Activated naive CD4-positive, alpha-beta T cell treated with anti-CD3 and anti-CD28 coated beads for 36 hours (primary cell): ENCODE measurements at regions of chr18 and their contacts with region 1.

Region 1: DNA sequence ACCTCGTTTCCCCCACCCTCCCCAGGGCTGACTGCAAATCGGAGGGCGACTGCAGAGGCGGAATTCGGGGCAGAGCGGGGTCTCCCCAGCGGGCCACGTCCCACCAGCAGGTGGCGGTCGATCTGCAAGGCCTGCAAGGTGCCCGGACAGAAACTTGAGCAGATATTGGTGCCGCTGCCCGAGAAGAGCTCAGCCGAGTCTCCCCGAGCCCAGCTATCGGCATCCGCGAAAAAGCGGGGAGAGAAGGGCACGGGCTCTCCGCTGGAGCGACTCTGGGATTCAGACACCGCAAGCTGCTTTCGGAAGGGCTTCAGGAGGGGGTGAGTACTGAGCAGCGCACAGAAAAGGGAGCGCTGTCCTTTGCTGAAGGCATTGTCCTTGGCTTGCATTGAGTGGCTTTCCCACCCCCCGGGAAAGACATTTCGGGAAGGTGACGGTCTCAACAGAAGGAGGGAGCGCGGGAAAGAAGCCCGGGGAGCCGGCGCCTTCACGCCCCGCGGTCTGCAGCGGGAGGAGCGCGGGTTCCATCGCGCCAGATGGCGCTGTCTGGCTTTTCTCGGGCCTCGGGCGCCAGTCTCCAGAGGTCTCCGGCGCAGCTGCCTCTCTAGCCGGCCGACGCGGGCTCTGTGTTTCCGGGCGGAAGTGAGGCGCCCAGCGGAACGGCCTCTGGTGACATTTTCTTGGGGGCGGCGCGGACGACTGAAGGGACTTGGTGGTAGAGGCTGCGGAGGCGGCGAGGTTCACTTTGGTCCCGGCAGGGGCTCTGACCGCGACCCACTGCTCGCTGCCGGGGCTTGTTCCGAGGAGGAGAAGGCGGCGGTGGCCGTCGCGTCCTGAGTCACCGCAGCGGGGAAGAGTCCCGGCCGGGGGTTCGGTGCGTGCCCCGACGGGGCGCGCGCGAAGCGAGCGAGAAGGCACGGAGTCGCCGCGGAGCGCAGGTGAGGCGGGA is 69.5 kb downstream of the HAUS1 start:
- DNase-seq: peak; percentile 95
- H3K4me3 Mint-ChIP-seq: peak overlapping the region; percentile 99
- H3K27ac Mint-ChIP-seq: peak overlapping the region; percentile 97
- H3K4me1 Mint-ChIP-seq: peaks cover 44% of the 10 kb centered on the region
- H3K27me3 Mint-ChIP-seq: no peaks in the 10 kb centered on the region

Region 2: DNA sequence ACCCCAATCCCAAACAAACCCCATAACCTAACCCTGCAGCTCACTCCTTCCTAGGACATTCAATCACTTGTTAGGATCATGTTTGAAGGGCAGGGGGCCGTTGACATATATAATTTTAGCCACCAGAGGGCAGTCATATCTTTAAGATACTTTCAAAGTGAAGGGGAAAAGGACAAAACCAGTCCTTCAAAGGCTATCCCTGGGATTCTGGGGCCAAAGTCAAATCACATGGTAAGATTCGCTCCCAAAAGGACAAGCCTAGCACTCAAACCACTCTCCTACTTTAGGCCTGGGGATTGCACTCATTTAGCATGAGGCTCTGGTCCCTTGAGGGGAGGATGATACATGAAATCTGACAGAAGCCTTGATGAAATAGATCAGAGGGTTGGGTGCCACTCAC is 24.9 kb before region 1 on chr18:
- CTCF ChIA-PET with region 1: interaction called, 29 read pairs
- intact Hi-C with region 1: loop called (anchors 1 kb)
- DNase-seq: peak; percentile 70
- H3K4me3 Mint-ChIP-seq: no peak overlapping the region
- H3K27ac Mint-ChIP-seq: peak overlapping the region; percentile 39
- H3K4me1 Mint-ChIP-seq: peaks cover 31% of the 10 kb centered on the region
- H3K27me3 Mint-ChIP-seq: no peaks in the 10 kb centered on the region

Region 3: GRCh38 chr18:46213295-46213694 is 39.6 kb after region 1 on chr18:
- CTCF ChIA-PET with region 1: interaction called, 97 read pairs
- intact Hi-C with region 1: loop called (anchors 1 kb)
- DNase-seq: no peak
- H3K4me3 Mint-ChIP-seq: no peak overlapping the region
- H3K27ac Mint-ChIP-seq: no peak overlapping the region
- H3K4me1 Mint-ChIP-seq: peaks cover 76% of the 10 kb centered on the region
- H3K27me3 Mint-ChIP-seq: no peaks in the 10 kb centered on the region

Region 4: GRCh38 chr18:46264235-46264893 is 90.7 kb after region 1 on chr18:
- CTCF ChIA-PET with region 1: interaction called, 15 read pairs
- intact Hi-C with region 1: no loop called
- DNase-seq: no peak
- H3K4me3 Mint-ChIP-seq: no peak overlapping the region
- H3K27ac Mint-ChIP-seq: no peak overlapping the region
- H3K4me1 Mint-ChIP-seq: peaks cover 51% of the 10 kb centered on the region
- H3K27me3 Mint-ChIP-seq: no peaks in the 10 kb centered on the region

Region 5: GRCh38 chr18:46343931-46344372 is 170.3 kb after region 1 on chr18:
- CTCF ChIA-PET with region 1: interaction called, 5 read pairs
- intact Hi-C with region 1: loop called (anchors 5 kb)
- DNase-seq: peak; percentile 85
- H3K4me3 Mint-ChIP-seq: no peak overlapping the region
- H3K27ac Mint-ChIP-seq: peak overlapping the region; percentile 57
- H3K4me1 Mint-ChIP-seq: peaks cover 23% of the 10 kb centered on the region
- H3K27me3 Mint-ChIP-seq: peaks cover 3% of the 10 kb centered on the region

Region 6: DNA sequence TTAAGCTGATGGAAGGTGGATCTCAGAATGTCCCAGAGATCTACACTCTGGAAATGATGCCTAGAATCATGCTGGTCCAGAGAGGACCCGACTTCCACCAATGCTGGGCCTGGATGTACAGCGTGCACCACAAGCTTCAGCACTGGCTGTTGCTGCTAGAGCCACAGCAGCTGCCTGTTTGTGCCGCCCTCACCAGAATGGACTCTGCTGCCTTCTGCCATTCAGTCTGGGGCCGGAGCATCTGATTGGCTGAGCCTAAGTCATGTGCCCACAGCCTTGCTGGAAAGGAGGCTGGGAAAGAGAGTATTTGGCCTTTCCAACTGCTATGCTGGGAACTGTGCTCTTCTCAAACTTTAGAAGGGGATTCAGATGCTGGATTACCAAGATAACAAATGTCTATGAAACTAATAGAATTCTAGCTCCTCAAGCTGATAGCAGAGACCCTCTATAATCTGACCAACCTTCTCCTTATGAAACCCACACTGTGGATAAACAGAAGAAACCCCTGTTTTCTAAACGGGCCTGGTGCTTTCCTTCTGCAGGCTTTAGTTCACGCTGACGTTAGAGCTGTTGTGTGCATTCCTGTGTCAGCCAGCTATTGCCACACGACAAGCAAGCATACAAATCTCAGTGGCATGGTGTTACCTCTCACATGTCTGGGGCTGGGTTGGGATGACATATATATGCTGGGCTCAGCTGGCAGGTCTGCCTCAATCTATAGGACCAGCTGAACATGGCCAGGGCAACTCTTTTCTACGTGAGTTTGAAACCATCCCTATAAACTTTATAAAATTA is 487.5 kb after region 1 on chr18:
- CTCF ChIA-PET with region 1: interaction called, 24 read pairs
- intact Hi-C with region 1: loop called (anchors 1 kb)
- DNase-seq: no peak
- H3K4me3 Mint-ChIP-seq: no peak overlapping the region
- H3K27ac Mint-ChIP-seq: no peak overlapping the region
- H3K4me1 Mint-ChIP-seq: no peaks in the 10 kb centered on the region
- H3K27me3 Mint-ChIP-seq: no peaks in the 10 kb centered on the region